T-cell (primary cell): ENCODE measurements at regions of chr12 and their contacts with region 1.

Region 1: GRCh38 chr12:93569656-93570551 is 2.6 kb upstream of the SOCS2 start:
- DNase-seq: peak; percentile 31 to 81 (median 58)
- ATAC-seq: peak; percentile 60 to 66 (median 64)
- H3K4me3 ChIP-seq: peak overlapping the region; percentile 86 to 97
- H3K4me3 Mint-ChIP-seq: peak overlapping the region; percentile 86 to 95 (median 90)
- H3K27ac ChIP-seq: peak overlapping the region; percentile 71
- H3K27ac Mint-ChIP-seq: peak overlapping the region; percentile 68 to 89
- H3K4me1 ChIP-seq: peaks cover 8 to 25% of the 10 kb centered on the region in 2 experiments
- H3K4me1 Mint-ChIP-seq: peaks cover 16 to 32% (median 32%) of the 10 kb centered on the region in 3 donors
- H3K27me3 ChIP-seq: peaks cover 0 to 18% of the 10 kb centered on the region in 2 experiments
- H3K27me3 Mint-ChIP-seq: peaks cover 0 to 7% of the 10 kb centered on the region in 2 donors

Region 2: GRCh38 chr12:92513231-92513730 is 1056.6 kb before region 1 on chr12:
- CTCF ChIA-PET with region 1: no interaction called
- POLR2A ChIA-PET with region 1: interaction called in 1 of 2 experiments, 15 read pairs
- DNase-seq: no peak
- ATAC-seq: no peak
- H3K4me3 ChIP-seq: no peak overlapping the region
- H3K4me3 Mint-ChIP-seq: no peak overlapping the region
- H3K27ac ChIP-seq: no peak overlapping the region
- H3K27ac Mint-ChIP-seq: no peak overlapping the region
- H3K4me1 ChIP-seq: no peaks in the 10 kb centered on the region
- H3K4me1 Mint-ChIP-seq: peaks cover 0 to 6% (median 5%) of the 10 kb centered on the region in 3 donors
- H3K27me3 ChIP-seq: no peaks in the 10 kb centered on the region
- H3K27me3 Mint-ChIP-seq: no peaks in the 10 kb centered on the region

Region 3: GRCh38 chr12:93341409-93342049 is 228.4 kb before region 1 on chr12:
- CTCF ChIA-PET with region 1: no interaction called
- POLR2A ChIA-PET with region 1: no interaction called
- DNase-seq: no peak
- ATAC-seq: no peak
- H3K4me3 ChIP-seq: no peak overlapping the region
- H3K4me3 Mint-ChIP-seq: no peak overlapping the region
- H3K27ac ChIP-seq: no peak overlapping the region
- H3K27ac Mint-ChIP-seq: no peak overlapping the region
- H3K4me1 ChIP-seq: no peaks in the 10 kb centered on the region
- H3K4me1 Mint-ChIP-seq: no peaks in the 10 kb centered on the region
- H3K27me3 ChIP-seq: peaks cover 0 to 7% of the 10 kb centered on the region in 2 experiments
- H3K27me3 Mint-ChIP-seq: peaks cover 0 to 2% of the 10 kb centered on the region in 2 donors

Region 4: DNA sequence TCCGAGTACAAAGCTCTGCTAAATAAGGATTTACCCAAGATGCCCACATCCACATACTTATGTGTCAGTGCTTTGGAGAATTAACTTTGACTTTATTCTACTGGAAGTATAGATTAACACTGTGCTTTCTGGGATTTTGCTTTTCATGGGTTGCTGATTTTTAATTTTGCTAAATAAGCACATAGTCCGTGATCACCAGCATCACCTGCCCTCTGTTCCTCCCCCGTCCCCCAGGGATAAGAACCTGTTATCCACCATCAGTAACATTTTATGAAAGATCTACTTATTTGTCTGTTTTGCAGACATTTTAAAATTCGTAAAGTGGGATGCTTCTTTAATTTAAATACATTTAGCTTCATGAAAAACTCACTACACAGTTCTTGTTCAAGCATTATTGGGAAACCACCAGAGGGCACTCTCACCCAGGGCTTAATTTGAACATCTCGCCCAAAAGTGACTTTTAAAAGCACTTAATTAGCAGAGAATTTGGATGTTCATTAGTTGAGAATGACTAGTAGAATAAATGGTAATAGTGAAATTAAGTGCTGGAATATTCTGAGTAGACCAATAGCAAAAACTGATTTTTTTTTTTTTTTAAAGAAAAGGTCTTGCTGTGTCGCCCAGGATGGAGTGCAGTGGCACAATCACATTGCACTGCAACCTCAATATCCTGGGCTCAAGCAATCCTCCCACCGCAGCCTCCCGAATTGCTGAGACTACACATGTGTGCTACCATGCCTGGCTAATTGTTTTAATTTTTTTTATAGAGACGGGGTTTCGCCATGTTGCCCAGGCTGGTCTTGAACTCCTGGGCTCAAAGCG is 66.9 kb before region 1 on chr12:
- CTCF ChIA-PET with region 1: interaction called in 1 of 2 experiments, 11 read pairs
- POLR2A ChIA-PET with region 1: interaction called in 1 of 2 experiments, 6 read pairs
- DNase-seq: peak; percentile 5 to 78 (median 54)
- ATAC-seq: peak in 1 of 4 experiments; percentile 46
- H3K4me3 ChIP-seq: no peak overlapping the region
- H3K4me3 Mint-ChIP-seq: no peak overlapping the region
- H3K27ac ChIP-seq: no peak overlapping the region
- H3K27ac Mint-ChIP-seq: no peak overlapping the region
- H3K4me1 ChIP-seq: no peaks in the 10 kb centered on the region
- H3K4me1 Mint-ChIP-seq: peaks cover 0 to 7% (median 0%) of the 10 kb centered on the region in 3 donors
- H3K27me3 ChIP-seq: no peaks in the 10 kb centered on the region
- H3K27me3 Mint-ChIP-seq: no peaks in the 10 kb centered on the region

Region 5: DNA sequence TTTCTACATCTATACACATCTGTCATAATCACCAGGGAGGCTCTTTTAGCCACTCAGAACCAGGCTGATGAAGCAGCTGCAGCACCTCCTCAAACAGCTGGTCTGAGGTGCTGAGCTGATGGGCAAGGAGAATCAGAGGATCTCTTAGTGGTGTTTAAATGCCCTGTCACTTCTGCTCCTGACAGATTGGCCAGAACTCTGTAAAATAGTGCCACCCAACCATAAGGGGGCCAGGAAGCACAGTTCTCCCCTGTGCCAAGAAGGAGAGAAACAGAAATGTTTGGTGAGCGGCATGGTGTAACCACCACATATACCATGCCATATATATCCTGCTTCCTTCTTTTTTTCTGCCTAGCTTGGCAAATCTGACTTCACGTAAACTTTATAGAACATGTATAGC is 15.3 kb after region 1 on chr12:
- CTCF ChIA-PET with region 1: interaction called in 1 of 2 experiments, 3 read pairs
- POLR2A ChIA-PET with region 1: interaction called, 4 to 10 read pairs
- DNase-seq: no peak
- ATAC-seq: no peak
- H3K4me3 ChIP-seq: no peak overlapping the region
- H3K4me3 Mint-ChIP-seq: no peak overlapping the region
- H3K27ac ChIP-seq: no peak overlapping the region
- H3K27ac Mint-ChIP-seq: no peak overlapping the region
- H3K4me1 ChIP-seq: no peaks in the 10 kb centered on the region
- H3K4me1 Mint-ChIP-seq: peaks cover 0 to 29% (median 24%) of the 10 kb centered on the region in 3 donors
- H3K27me3 ChIP-seq: peaks cover 0 to 5% of the 10 kb centered on the region in 2 experiments
- H3K27me3 Mint-ChIP-seq: peaks cover 9% of the 10 kb centered on the region in 2 donors

Region 6: DNA sequence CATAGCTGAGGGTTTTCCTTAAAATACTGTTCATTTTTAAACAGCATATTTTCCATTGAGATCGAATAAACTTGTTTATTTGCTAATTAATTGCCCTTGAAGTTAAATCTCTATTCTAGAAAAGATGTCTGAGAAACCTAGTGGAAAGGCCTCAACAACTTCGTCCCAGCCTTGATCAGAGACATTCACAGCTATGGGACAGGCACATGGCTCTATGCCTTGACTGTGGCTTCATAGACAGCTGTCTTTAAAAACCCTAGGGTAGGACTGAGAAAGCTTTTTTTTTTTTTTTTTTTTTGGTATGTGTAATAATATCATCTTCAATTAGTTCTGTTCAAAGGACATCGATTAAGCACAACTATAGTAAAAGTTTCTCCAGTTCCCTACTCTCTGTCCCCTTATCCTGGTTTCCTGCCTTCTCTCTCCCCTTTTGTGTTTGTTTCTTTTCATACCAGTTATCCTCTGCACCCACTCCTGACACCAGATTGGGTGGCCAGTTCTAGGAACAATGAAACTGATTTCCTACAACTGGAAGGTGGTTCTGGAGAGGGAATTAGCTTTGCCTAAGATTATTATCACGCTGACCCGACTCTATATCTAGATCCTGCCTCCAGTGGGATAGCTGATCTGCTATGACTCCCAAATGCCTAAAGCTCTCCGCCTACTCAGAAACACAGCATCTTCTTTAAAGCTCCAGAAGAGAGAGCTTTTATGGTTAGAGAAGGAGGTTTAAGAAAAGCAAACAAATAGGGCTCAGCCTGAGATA is 22.9 kb after region 1 on chr12:
- CTCF ChIA-PET with region 1: interaction called in 1 of 2 experiments, 3 read pairs
- POLR2A ChIA-PET with region 1: interaction called in 1 of 2 experiments, 12 read pairs
- DNase-seq: no peak
- ATAC-seq: no peak
- H3K4me3 ChIP-seq: no peak overlapping the region
- H3K4me3 Mint-ChIP-seq: no peak overlapping the region
- H3K27ac ChIP-seq: no peak overlapping the region
- H3K27ac Mint-ChIP-seq: no peak overlapping the region
- H3K4me1 ChIP-seq: peaks cover 4 to 9% of the 10 kb centered on the region in 2 experiments
- H3K4me1 Mint-ChIP-seq: peaks cover 14 to 30% (median 24%) of the 10 kb centered on the region in 3 donors
- H3K27me3 ChIP-seq: peaks cover 0 to 20% of the 10 kb centered on the region in 2 experiments
- H3K27me3 Mint-ChIP-seq: peaks cover 50 to 54% of the 10 kb centered on the region in 2 donors

Region 7: GRCh38 chr12:93979189-93979588 is 409.3 kb after region 1 on chr12:
- CTCF ChIA-PET with region 1: interaction called in 1 of 2 experiments, 4 read pairs
- POLR2A ChIA-PET with region 1: interaction called in 1 of 2 experiments, 19 read pairs
- DNase-seq: peak in 7 of 35 experiments; percentile 1 to 54 (median 10)
- ATAC-seq: no peak
- H3K4me3 ChIP-seq: no peak overlapping the region
- H3K4me3 Mint-ChIP-seq: no peak overlapping the region
- H3K27ac ChIP-seq: no peak overlapping the region
- H3K27ac Mint-ChIP-seq: no peak overlapping the region
- H3K4me1 ChIP-seq: peaks cover 2 to 17% of the 10 kb centered on the region in 2 experiments
- H3K4me1 Mint-ChIP-seq: peaks cover 14 to 40% (median 27%) of the 10 kb centered on the region in 3 donors
- H3K27me3 ChIP-seq: no peaks in the 10 kb centered on the region
- H3K27me3 Mint-ChIP-seq: no peaks in the 10 kb centered on the region